GM12878 (cell line): ENCODE measurements at regions of chr12 and their contacts with region 1.

Region 1: GRCh38 chr12:4526923-4527546 is 11.7 kb upstream of the RAD51AP1 start:
- DNase-seq: no peak
- ATAC-seq: no peak
- H3K4me3 ChIP-seq: no peak overlapping the region
- H3K27ac ChIP-seq: no peak overlapping the region
- H3K4me1 ChIP-seq: no peaks in the 10 kb centered on the region
- H3K27me3 ChIP-seq: no peaks in the 10 kb centered on the region
- CTCF ChIP-seq: peak in 2 of 3 experiments; percentile 14 to 31; a peak in 3 of 6 replicates
- EP300 ChIP-seq: no peak
- POLR2A ChIP-seq: no peak
- RAD21 ChIP-seq: peak; percentile 42

Region 2: DNA sequence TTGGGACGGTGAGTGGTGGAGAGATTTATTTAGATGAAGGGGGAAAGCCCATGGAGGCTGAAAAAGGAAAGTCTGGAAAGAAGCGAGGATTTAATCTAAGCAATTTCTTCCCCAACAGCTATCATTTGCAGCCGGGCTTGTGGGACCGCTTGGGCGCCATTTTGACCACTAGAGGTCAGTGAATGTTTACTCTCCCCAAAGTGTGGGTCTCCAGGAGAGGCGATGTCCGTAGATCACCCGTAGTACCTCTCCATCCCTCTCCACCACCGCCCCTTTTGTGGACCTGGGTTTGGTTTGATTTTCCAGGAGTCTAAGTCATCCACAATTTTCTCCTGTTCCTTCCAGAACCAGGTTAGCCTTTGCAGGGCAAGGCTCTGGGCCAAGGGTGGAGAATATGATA is 562.6 kb before region 1 on chr12:
- CTCF ChIA-PET with region 1: no interaction called
- POLR2A ChIA-PET with region 1: no interaction called
- RAD21 ChIA-PET with region 1: no interaction called
- SMC1A ChIA-PET with region 1: interaction called, 3 read pairs
- in situ Hi-C with region 1: no loop called
- intact Hi-C with region 1: loop called (anchors 10 kb)
- DNase-seq: no peak
- ATAC-seq: peak; percentile 91
- H3K4me3 ChIP-seq: no peak overlapping the region
- H3K27ac ChIP-seq: no peak overlapping the region
- H3K4me1 ChIP-seq: no peaks in the 10 kb centered on the region
- H3K27me3 ChIP-seq: peaks cover 0 to 3% of the 10 kb centered on the region in 2 experiments; a peak in 3 of 4 replicates
- CTCF ChIP-seq: peak; percentile 56 to 69 (median 57)
- EP300 ChIP-seq: no peak
- POLR2A ChIP-seq: no peak
- RAD21 ChIP-seq: peak; percentile 42; the same call in 1 of the 2 replicates

Region 3: DNA sequence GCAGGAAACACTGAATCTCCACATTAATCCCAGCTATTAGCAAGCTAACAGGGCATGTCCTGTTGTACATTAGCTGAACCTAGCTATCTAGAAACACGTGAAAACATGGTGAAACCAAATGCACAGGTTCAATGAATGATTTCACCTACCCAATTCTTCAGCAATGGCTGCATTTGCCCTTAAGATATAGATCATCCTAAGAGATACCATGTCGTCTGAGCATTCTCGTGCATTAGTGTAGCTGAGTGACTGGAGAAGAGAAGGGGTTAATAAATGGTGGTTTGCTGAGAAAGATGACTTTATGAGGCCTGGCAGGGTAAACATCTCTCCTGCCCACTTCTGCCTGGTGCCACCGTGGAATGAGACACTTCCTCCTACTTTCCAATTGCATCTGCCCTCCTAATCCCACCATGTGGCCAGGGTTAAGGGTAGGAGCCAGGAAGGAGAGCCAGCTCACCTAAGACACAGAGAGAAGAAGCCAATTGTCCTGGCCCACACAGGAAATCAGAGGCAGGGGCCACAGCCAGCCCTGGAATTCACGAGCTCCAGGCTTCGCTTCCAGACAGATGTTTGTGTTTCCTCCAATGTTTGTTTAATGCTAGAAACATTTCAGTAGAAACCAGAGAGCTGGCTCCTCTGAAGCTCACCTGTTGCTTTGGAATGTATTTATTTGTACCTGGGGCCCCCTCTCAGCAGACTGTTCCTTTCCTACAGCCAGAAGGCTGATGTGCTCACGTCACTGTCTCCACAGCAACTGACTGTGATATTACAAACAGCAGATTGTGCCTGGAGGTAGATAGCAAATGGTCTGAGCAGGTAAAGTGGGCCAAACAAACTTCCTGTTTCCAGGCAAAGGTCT is 527.8 kb before region 1 on chr12:
- CTCF ChIA-PET with region 1: interaction called, 5 read pairs
- POLR2A ChIA-PET with region 1: no interaction called
- RAD21 ChIA-PET with region 1: interaction called, 3 read pairs
- SMC1A ChIA-PET with region 1: interaction called, 3 read pairs
- in situ Hi-C with region 1: no loop called
- intact Hi-C with region 1: loop called (anchors 10 kb)
- DNase-seq: no peak
- ATAC-seq: no peak
- H3K4me3 ChIP-seq: no peak overlapping the region
- H3K27ac ChIP-seq: no peak overlapping the region
- H3K4me1 ChIP-seq: no peaks in the 10 kb centered on the region
- H3K27me3 ChIP-seq: peaks cover 0 to 7% of the 10 kb centered on the region in 2 experiments; a peak in 2 of 4 replicates
- CTCF ChIP-seq: no peak
- EP300 ChIP-seq: no peak
- POLR2A ChIP-seq: no peak
- RAD21 ChIP-seq: no peak

Region 4: DNA sequence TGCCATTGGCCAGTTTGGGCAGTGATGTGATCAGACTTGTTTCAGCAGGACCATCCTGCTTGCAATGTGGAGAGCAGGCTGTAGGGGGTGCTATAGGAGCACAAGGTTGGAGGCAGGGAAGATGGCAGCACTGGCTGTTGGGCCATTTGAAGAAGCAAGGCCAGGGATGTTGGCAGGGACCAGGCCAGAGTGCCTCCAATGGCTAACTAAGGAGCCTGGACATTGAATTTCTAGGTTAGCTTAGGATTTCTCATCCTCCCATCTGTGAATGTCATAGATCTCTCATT is 171.1 kb before region 1 on chr12:
- CTCF ChIA-PET with region 1: interaction called, 10 read pairs
- POLR2A ChIA-PET with region 1: no interaction called
- RAD21 ChIA-PET with region 1: interaction called, 4 read pairs
- SMC1A ChIA-PET with region 1: no interaction called
- in situ Hi-C with region 1: no loop called
- intact Hi-C with region 1: no loop called
- DNase-seq: no peak
- ATAC-seq: peak; percentile 86
- H3K4me3 ChIP-seq: no peak overlapping the region
- H3K27ac ChIP-seq: no peak overlapping the region
- H3K4me1 ChIP-seq: no peaks in the 10 kb centered on the region
- H3K27me3 ChIP-seq: no peaks in the 10 kb centered on the region
- CTCF ChIP-seq: peak; percentile 43 to 70 (median 64)
- EP300 ChIP-seq: no peak
- POLR2A ChIP-seq: no peak
- RAD21 ChIP-seq: peak; percentile 57

Region 5: GRCh38 chr12:4402996-4403395 is 124.0 kb before region 1 on chr12:
- CTCF ChIA-PET with region 1: no interaction called
- POLR2A ChIA-PET with region 1: no interaction called
- RAD21 ChIA-PET with region 1: no interaction called
- SMC1A ChIA-PET with region 1: no interaction called
- in situ Hi-C with region 1: no loop called
- intact Hi-C with region 1: no loop called
- DNase-seq: no peak
- ATAC-seq: no peak
- H3K4me3 ChIP-seq: no peak overlapping the region
- H3K27ac ChIP-seq: no peak overlapping the region
- H3K4me1 ChIP-seq: no peaks in the 10 kb centered on the region
- H3K27me3 ChIP-seq: no peaks in the 10 kb centered on the region; a peak in 2 of 4 replicates
- CTCF ChIP-seq: no peak
- EP300 ChIP-seq: no peak
- POLR2A ChIP-seq: no peak
- RAD21 ChIP-seq: no peak

Region 6: GRCh38 chr12:4421590-4422031 is 105.4 kb before region 1 on chr12:
- CTCF ChIA-PET with region 1: interaction called, 28 read pairs
- POLR2A ChIA-PET with region 1: no interaction called
- RAD21 ChIA-PET with region 1: interaction called, 4 read pairs
- SMC1A ChIA-PET with region 1: interaction called, 3 read pairs
- in situ Hi-C with region 1: no loop called
- intact Hi-C with region 1: loop called (anchors 2 kb)
- DNase-seq: no peak
- ATAC-seq: peak; percentile 69
- H3K4me3 ChIP-seq: no peak overlapping the region
- H3K27ac ChIP-seq: no peak overlapping the region
- H3K4me1 ChIP-seq: no peaks in the 10 kb centered on the region
- H3K27me3 ChIP-seq: peaks cover 0 to 3% of the 10 kb centered on the region in 2 experiments; a peak in 3 of 4 replicates
- CTCF ChIP-seq: peak; percentile 51 to 62 (median 57); a peak in 5 of 6 replicates
- EP300 ChIP-seq: no peak
- POLR2A ChIP-seq: no peak
- RAD21 ChIP-seq: peak; percentile 59

Region 7: DNA sequence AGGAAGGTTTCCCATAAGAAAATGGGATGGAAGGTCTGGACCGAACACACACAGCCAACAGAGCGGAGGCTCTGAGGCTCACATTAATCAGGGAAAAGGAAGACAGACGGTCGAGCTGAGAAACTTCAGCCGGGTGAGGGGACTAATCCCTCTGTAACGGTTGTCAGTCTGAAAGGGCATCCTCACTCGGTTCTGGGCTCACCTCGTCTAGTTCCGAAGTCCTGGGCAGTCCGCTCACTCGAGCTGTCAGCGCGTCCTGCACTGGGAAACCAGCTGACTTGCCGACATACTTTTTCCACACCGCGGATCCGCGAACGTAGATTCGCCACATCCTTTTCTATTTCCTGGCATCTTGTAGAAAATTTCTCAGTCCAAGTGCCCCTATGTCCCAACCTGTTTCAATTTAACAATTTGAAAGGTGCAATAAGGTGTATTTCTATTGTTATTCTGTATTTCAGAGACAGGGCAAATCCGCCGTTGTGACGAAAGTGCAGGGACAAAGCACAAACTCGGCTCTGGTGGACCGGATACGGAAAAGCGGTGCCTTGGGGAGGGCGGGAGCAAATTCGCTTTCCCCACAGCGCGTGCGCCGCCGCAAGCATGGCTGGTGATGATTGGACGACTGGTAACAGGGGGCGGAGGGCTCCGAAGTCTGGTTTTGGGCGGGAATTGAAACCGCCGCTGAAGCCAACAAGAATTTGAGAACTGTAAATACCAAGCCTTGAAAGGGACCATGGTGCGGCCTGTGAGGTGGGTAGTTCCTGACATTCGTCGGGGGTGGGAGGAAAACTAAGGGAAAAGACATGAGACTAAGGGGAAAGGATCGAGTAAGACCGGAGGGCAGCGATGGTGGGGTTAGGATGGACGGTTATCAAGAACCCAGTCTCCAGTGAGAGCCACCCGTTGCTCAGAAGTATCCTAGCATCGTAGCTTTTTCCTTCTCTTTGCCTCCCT is 11.4 kb after region 1 on chr12 and contains the start of gene RAD51AP1:
- CTCF ChIA-PET with region 1: interaction called, 5 read pairs
- POLR2A ChIA-PET with region 1: no interaction called
- RAD21 ChIA-PET with region 1: no interaction called
- SMC1A ChIA-PET with region 1: interaction called, 10 read pairs
- in situ Hi-C with region 1: no loop called
- intact Hi-C with region 1: no loop called
- DNase-seq: peak; percentile 92
- ATAC-seq: peak; percentile 97
- H3K4me3 ChIP-seq: peak within 1 kb of the TSS; percentile 90
- H3K27ac ChIP-seq: peak within 1 kb of the TSS; percentile 99
- H3K4me1 ChIP-seq: peaks cover 15% of the 10 kb centered on the region
- H3K27me3 ChIP-seq: no peaks in the 10 kb centered on the region
- CTCF ChIP-seq: no peak
- EP300 ChIP-seq: peak in 1 of 2 experiments; percentile 100; a peak in 2 of 4 replicates
- POLR2A ChIP-seq: peak; percentile 80
- RAD21 ChIP-seq: no peak
- polyA plus RNA-seq, gene RAD51AP1: 71.4 to 86.0 TPM

Region 8: GRCh38 chr12:4552191-4552590 is 25.2 kb after region 1 on chr12:
- CTCF ChIA-PET with region 1: no interaction called
- POLR2A ChIA-PET with region 1: no interaction called
- RAD21 ChIA-PET with region 1: no interaction called
- SMC1A ChIA-PET with region 1: no interaction called
- in situ Hi-C with region 1: no loop called
- intact Hi-C with region 1: no loop called
- DNase-seq: no peak
- ATAC-seq: no peak
- H3K4me3 ChIP-seq: no peak overlapping the region
- H3K27ac ChIP-seq: no peak overlapping the region
- H3K4me1 ChIP-seq: no peaks in the 10 kb centered on the region
- H3K27me3 ChIP-seq: no peaks in the 10 kb centered on the region
- CTCF ChIP-seq: no peak
- EP300 ChIP-seq: no peak
- POLR2A ChIP-seq: no peak
- RAD21 ChIP-seq: no peak